ENCODE measurements at regions of chr17 and their contacts with region 1.

Region 1: DNA sequence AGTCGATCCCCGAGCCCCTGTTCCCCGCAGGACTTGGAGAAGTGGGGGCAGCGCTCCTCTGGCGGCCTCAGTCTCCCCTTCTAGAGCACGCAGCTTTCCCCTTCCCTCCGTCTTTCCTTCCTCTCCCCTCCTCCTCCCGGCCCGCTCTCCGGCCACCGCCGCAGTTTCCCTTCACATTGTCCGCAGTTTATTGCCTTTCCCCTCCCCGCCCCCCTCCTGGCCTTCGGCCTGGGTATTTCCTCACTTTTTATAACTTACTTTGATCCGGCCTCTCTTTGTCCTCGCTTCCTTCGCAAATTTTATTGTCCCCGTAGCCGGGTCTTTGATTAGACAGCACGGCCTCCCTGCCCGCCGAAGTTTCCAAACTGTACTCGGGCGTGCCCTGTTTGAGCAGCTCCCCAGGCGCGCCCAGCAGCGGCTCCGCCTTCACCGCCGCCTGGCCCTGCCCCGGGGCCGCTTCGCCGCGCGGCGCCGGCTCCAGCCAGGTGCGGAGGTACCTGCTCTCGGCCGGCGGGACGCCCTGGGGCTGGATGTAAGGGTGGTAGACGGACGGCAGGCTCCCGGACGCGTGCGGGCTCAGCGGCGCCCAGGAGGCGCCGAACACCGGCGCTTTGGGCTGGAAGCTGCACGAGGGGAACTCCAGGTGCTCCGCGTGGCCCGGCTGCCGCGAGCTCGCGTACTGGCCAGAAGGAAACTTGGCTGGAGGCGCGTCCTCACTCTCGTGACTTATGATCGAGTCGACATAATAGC is 488 bp downstream of the HOXB9 start:
- DNase-seq: peak; percentile 49
- H3K4me3 Mint-ChIP-seq: peak overlapping the region; percentile 64
- H3K27ac Mint-ChIP-seq: no peak overlapping the region
- H3K4me1 Mint-ChIP-seq: peaks cover 17% of the 10 kb centered on the region
- H3K27me3 Mint-ChIP-seq: peaks cover 100% of the 10 kb centered on the region

Region 2: DNA sequence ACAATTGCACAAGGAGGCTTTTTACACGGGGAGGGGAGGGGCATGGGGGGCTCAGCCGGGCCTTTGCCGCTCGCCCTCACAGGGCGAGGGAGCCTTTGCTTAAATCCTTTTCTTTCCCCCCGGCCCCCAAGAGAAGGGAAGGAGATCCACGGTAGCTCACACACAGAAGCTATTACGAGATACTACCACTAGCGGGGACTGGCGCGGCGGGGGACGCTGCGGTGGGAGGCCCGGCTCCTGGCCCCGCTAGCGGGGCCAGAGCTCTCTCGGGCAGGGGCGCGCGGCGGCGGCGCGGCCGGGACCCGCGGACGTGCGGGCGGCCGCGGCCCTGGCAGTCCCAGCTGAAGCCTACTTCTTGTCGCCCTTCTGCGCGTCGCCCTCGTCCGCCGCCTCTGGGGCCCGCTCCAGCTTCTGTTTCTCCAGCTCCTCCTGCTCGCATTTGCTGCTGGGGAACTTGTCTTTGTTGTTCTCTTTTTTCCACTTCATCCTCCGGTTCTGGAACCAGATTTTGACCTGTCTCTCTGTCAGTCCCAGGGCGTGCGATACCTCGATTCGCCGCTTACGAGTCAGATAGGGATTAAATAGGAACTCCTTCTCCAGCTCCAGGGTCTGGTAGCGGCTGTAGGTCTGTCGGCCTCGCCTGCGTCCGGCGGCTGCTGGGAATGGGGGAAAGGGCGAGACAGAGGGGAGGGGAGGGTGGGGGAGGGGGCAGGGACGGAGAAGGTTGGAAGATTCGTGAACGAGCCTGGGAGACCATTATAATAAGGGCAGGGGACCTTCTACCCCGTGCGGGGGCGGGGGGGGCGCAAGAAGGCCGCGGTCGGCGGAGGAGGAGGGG is 12.6 kb before region 1 on chr17:
- CTCF ChIA-PET with region 1: interaction called, 11 read pairs
- DNase-seq: peak; percentile 62
- H3K4me3 Mint-ChIP-seq: peak overlapping the region; percentile 61
- H3K27ac Mint-ChIP-seq: peak overlapping the region; percentile 75
- H3K4me1 Mint-ChIP-seq: peaks cover 48% of the 10 kb centered on the region
- H3K27me3 Mint-ChIP-seq: peaks cover 100% of the 10 kb centered on the region

Measured in activated naive CD4-positive, alpha-beta T cell treated with anti-CD3 and anti-CD28 coated beads, Interleukin-2, amount 10 ng/mL, durations not matched to agents 7 days and 5 days (primary cell).